CD8-positive, alpha-beta memory T cell (primary cell): ENCODE measurements at regions of chr10 and their contacts with region 1.

Region 1: GRCh38 chr10:88926566-88927415 is 25.8 kb downstream of the ACTA2 start:
- DNase-seq: no peak
- H3K4me3 ChIP-seq: no peak overlapping the region
- H3K4me3 Mint-ChIP-seq: no peak overlapping the region
- H3K27ac ChIP-seq: no peak overlapping the region
- H3K27ac Mint-ChIP-seq: no peak overlapping the region
- H3K4me1 ChIP-seq: no peaks in the 10 kb centered on the region
- H3K4me1 Mint-ChIP-seq: peaks cover 0 to 3% (median 0%) of the 10 kb centered on the region in 3 donors
- H3K27me3 ChIP-seq: no peaks in the 10 kb centered on the region
- H3K27me3 Mint-ChIP-seq: no peaks in the 10 kb centered on the region

Region 2: GRCh38 chr10:88901206-88901983 is 25.4 kb before region 1 on chr10:
- CTCF ChIA-PET with region 1: interaction called, 5 read pairs
- POLR2A ChIA-PET with region 1: interaction called, 10 read pairs
- DNase-seq: no peak
- H3K4me3 ChIP-seq: no peak overlapping the region
- H3K4me3 Mint-ChIP-seq: peak overlapping the region in 1 of 7 donors; percentile 12
- H3K27ac ChIP-seq: no peak overlapping the region
- H3K27ac Mint-ChIP-seq: peak overlapping the region in 7 of 8 donors; percentile 19 to 70 (median 54)
- H3K4me1 ChIP-seq: peaks cover 29% of the 10 kb centered on the region
- H3K4me1 Mint-ChIP-seq: peaks cover 47 to 56% (median 55%) of the 10 kb centered on the region in 3 donors
- H3K27me3 ChIP-seq: no peaks in the 10 kb centered on the region
- H3K27me3 Mint-ChIP-seq: no peaks in the 10 kb centered on the region